Posterior vena cava (tissue), 2 donors: ENCODE measurements at regions of chr1 and their contacts with region 1.

Region 1: DNA sequence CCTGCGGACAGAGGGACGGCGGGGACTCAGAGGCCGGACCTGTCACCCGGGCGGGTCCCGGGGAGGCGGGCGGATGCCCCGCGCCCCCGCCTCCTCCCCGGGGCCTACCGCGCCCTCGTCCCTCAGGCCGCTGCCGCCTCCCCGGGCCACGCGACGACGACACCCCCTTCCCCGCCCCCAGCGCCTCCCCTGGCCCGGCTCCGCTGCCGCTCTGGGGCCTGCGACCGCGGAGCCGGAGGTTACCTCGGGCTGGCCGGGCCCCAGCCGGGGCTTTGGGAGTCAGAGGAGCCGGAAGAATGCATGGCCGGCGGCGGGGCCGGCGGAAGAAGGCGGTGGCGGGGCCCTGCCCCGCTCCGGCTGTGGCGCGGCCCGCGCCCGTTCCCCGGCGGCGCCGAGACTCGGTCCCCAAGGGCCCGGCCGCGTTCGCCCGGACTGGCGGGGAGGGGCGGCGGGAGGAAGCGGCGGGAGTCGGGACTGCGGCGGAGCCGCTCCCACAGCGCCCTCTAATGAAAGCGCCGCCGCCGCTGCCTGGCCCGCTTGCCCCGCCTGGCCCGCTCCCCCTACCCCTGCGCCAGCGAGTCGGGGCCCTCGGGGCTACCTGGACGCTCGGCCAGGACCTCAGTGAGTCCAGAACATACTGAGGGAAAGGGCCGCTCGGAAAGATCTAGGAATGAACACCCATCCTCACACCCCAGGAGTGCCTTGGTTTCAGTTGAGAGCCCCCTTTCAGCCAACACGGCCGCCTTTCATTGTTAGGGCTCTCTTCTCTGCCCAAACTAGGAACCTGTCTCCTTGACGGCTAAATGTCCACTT is at the start of gene LPGAT1:
- DNase-seq: peak; percentile 93
- total RNA-seq, gene LPGAT1: 39.7 to 51.9 TPM

Region 2: DNA sequence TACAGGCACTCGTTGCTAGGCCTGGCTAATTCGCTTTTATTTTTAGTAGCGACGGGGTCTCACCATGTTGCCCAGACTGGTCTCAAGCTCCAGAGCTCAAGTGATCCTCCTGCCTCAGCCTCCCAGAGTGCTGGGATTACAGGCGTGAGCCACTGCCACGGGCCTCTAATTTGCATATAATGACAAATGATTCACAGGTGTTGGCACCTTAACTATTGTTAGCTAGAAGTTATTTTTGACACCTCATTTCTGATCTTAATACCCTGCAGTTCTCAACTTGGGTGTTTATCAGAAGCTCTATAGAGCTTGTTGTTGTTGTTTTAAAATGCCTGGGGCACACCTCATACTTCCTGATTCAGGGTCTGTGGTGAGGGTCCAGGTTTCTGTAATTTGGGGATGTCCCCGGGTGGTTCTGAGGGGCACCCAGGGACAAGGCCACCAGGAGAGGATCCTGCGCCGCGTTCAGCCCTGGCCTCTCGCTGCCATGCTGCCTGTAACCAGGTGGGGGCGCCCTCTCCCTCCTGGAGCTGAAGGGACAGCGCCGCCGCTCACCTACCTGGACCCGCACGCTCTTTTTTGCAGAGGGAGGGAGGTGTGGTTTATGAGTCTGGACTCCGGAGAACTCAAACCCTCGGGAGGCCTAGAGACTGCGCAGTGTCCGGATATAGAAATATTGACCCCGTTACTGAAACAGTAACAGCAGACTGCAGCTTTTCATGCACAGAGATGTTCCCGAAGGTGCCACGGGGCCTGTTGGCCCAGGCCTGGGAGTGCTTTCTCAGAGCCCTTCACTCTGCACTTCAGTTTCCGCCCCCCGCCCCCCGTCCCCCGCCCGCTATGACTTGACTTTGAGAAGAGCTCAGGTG is 132.1 kb before region 1 on chr1:
- intact Hi-C with region 1: loop called in 1 of 2 experiments (anchors 10 kb)
- DNase-seq: peak; percentile 93